GM13976 (cell line): ENCODE measurements at regions of chr17 and their contacts with region 1.

Region 1: DNA sequence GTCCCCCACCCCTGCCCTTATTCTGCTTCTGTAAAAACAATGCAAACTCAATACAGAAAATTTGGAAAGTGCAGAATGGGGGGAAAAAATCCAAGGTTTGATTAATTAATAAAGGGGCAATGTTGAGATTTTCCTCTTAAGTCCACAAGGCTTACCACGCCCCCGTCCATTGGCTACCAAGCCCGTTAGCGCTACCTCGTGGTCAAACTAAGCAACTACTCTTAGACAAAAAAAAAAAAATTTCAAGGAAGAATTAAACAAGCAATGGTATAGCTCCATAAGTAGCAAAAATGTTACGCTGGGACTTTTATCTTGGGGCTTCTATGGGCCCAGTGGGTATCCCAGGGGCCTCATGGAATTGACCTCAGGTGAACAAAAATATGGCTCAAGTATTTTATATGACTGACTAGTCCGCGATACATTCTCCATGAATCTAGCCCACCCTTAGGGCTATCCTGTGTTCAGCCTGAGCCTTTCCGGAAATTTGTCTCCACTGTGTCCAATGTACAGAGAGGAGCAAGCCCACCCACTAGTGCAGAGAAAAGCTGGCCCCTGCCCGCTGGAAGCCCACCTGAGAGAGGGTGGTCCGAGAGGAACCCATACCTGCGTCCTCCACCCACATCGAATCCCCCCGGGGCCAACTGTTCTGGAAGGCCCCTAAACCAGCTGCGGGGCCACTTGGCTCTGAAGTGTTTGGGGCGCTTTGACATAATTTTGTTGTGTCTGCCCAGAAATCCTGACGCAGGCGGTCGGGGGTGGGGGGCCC is 19.1 kb upstream of the TEX2 start:
- DNase-seq: peak; percentile 72
- CTCF ChIP-seq: peak; percentile 62

Region 2: GRCh38 chr17:64160378-64160777 is 121.8 kb before region 1 on chr17:
- in situ Hi-C with region 1: loop called (anchors 10 kb)
- DNase-seq: no peak
- CTCF ChIP-seq: no peak

Region 3: GRCh38 chr17:64343853-64344637 is 61.9 kb after region 1 on chr17:
- in situ Hi-C with region 1: no loop called
- DNase-seq: peak; percentile 52
- CTCF ChIP-seq: no peak